Heart right ventricle (tissue), 16 donors: ENCODE measurements at regions of chr3 and their contacts with region 1.

Region 1: DNA sequence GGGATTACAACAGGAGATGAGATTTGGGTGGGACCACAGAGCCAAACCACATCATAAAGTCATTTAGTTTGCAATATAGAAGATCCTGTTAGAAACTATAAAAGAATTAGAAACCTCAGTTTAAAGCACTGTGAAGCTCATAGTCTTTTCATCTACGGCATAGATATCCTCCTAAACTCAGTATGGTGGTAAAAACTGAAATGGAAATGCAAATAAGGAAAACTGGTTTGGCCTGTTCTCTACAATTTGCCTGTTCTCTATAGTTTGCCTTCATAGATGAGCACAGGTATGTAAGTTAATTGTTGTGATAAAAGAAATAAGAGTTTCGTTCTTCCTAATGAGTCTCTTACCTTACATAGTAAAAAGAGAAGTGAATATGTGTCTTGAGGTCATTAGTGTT is 331.6 kb upstream of the ARL6 start:
- DNase-seq: no peak
- ATAC-seq: no peak
- H3K4me3 ChIP-seq: no peak overlapping the region
- H3K27ac ChIP-seq: no peak overlapping the region
- H3K4me1 ChIP-seq: no peaks in the 10 kb centered on the region
- H3K27me3 ChIP-seq: no peaks in the 10 kb centered on the region
- CTCF ChIP-seq: no peak

Region 2: GRCh38 chr3:97197101-97197500 is 235.8 kb before region 1 on chr3:
- intact Hi-C with region 1: no loop called
- DNase-seq: no peak
- ATAC-seq: no peak
- H3K4me3 ChIP-seq: no peak overlapping the region
- H3K27ac ChIP-seq: no peak overlapping the region
- H3K4me1 ChIP-seq: no peaks in the 10 kb centered on the region
- H3K27me3 ChIP-seq: no peaks in the 10 kb centered on the region
- CTCF ChIP-seq: no peak

Region 3: GRCh38 chr3:97384581-97384980 is 48.3 kb before region 1 on chr3:
- intact Hi-C with region 1: loop called in 1 of 10 experiments (anchors 10 kb)
- DNase-seq: no peak
- ATAC-seq: no peak
- H3K4me3 ChIP-seq: no peak overlapping the region
- H3K27ac ChIP-seq: no peak overlapping the region
- H3K4me1 ChIP-seq: no peaks in the 10 kb centered on the region
- H3K27me3 ChIP-seq: no peaks in the 10 kb centered on the region
- CTCF ChIP-seq: no peak